ENCODE measurements at regions of chr7 and their contacts with region 1.

Region 1: GRCh38 chr7:111763221-111763801 is 201.0 kb upstream of the IMMP2L start:
- DNase-seq: peak in 2 of 4 donors; percentile 19 to 31
- ATAC-seq: peak; percentile 75
- H3K4me3 ChIP-seq: no peak overlapping the region
- H3K27ac ChIP-seq: no peak overlapping the region
- H3K4me1 ChIP-seq: no peaks in the 10 kb centered on the region
- H3K27me3 ChIP-seq: no peaks in the 10 kb centered on the region
- CTCF ChIP-seq: peak; percentile 45 to 78 (median 68)
- POLR2A ChIP-seq: no peak

Region 2: DNA sequence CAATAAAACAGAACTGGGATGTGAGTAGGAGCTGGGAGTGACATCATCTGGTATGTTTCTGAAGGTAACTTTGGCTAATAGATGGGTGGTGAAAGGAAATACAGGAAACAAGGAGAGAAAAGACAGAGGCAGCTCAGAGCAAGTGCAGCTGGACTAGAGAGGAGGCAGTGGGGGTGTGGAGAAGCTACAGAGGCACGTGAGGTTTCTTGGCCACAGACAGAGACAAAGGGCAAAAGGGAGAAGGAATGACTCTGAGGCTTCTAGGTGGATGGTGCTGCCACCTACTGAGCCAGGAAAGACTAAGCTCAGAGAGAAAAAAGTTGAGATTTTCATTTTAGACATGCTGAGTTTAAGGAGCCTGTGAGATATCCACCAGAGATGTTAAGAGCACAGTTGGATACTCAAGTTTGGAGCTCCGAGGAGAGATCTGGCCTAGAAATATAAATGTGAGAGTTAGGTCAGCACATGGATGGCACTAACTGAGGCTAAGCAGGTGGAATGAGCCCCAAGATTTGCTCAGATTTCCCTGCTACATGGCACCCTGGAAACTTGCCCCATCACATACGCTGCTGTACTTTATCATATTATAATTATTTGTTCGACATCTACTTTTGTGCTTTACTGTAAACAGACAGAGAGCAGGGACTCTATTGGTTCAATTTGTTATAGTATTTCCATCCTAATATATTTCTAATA is 92.0 kb after region 1 on chr7:
- intact Hi-C with region 1: loop called (anchors 10 kb)
- DNase-seq: peak; percentile 32 to 59 (median 50)
- ATAC-seq: peak; percentile 74
- H3K4me3 ChIP-seq: no peak overlapping the region
- H3K27ac ChIP-seq: no peak overlapping the region
- H3K4me1 ChIP-seq: peaks cover 7% of the 10 kb centered on the region
- H3K27me3 ChIP-seq: no peaks in the 10 kb centered on the region
- CTCF ChIP-seq: peak; percentile 27 to 71 (median 57)
- POLR2A ChIP-seq: no peak